Activated T-helper 1 cell treated with anti-CD3 and anti-CD28 coated beads, Interleukin-12 subunit alpha, Interleukin-12 subunit beta, Interleukin-2, Interleukin-4 antibody, amounts not matched to agents 30 ng/mL and 10 ng/mL and 1 ng/mL, durations not matched to agents 14 hours and 24 hours and 36 hours (primary cell): ENCODE measurements at regions of chr9 and their contacts with region 1.

Region 1: GRCh38 chr9:20496328-20496727 is 126.0 kb downstream of the MLLT3 start:
- DNase-seq: no peak
- H3K4me3 Mint-ChIP-seq: no peak overlapping the region
- H3K27ac Mint-ChIP-seq: no peak overlapping the region
- H3K4me1 Mint-ChIP-seq: peaks cover 27% of the 10 kb centered on the region
- H3K27me3 Mint-ChIP-seq: no peaks in the 10 kb centered on the region

Region 2: GRCh38 chr9:20479419-20480155 is 16.7 kb before region 1 on chr9:
- intact Hi-C with region 1: loop called (anchors 2 kb)
- DNase-seq: no peak
- H3K4me3 Mint-ChIP-seq: no peak overlapping the region
- H3K27ac Mint-ChIP-seq: no peak overlapping the region
- H3K4me1 Mint-ChIP-seq: peaks cover 31% of the 10 kb centered on the region
- H3K27me3 Mint-ChIP-seq: no peaks in the 10 kb centered on the region

Region 3: GRCh38 chr9:21367957-21368356 is 871.6 kb after region 1 on chr9 and contains the start of gene IFNA13:
- intact Hi-C with region 1: no loop called
- DNase-seq: no peak
- H3K4me3 Mint-ChIP-seq: no peak within 1 kb of the TSS
- H3K27ac Mint-ChIP-seq: no peak within 1 kb of the TSS
- H3K4me1 Mint-ChIP-seq: no peaks in the 10 kb centered on the region
- H3K27me3 Mint-ChIP-seq: peaks cover 38% of the 10 kb centered on the region
- total RNA-seq, gene IFNA13: not detected in 2 replicates